Posterior vena cava (tissue), 2 donors: ENCODE measurements at regions of chr4 and their contacts with region 1.

Region 1: DNA sequence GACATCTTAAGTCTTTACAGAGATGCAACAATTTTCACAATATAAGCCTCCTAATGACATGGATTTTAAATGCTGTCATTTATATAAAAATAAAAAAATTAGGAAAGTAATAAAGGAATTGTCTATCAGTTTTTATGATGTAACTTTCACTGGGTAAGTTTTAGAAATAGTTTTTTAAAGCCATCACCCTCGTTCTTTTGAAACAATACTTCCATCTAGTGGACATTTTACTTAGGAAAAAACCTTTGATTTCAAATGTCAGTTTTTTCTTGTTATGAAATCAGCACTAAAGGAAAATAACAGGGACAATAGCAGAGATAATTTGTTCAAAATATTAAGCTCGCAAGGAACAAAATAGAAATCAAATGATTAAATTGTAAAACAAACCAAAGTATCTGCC is 24.3 kb upstream of the NDNF start:
- DNase-seq: no peak

Region 2: GRCh38 chr4:120156120-120156718 is 940.4 kb before region 1 on chr4:
- intact Hi-C with region 1: loop called in 1 of 2 experiments (anchors 10 kb)
- DNase-seq: no peak